Breast epithelium (tissue), 4 donors: ENCODE measurements at regions of chr5 and their contacts with region 1.

Region 1: GRCh38 chr5:108136493-108136892 is 245.4 kb downstream of the FBXL17 start:
- DNase-seq: no peak
- H3K4me3 ChIP-seq: no peak overlapping the region
- H3K27ac ChIP-seq: no peak overlapping the region
- H3K4me1 ChIP-seq: no peaks in the 10 kb centered on the region
- H3K27me3 ChIP-seq: no peaks in the 10 kb centered on the region
- CTCF ChIP-seq: no peak
- POLR2A ChIP-seq: no peak

Region 2: GRCh38 chr5:107329850-107330249 is 806.6 kb before region 1 on chr5:
- intact Hi-C with region 1: no loop called
- DNase-seq: no peak
- H3K4me3 ChIP-seq: no peak overlapping the region
- H3K27ac ChIP-seq: peak overlapping the region in 1 of 2 donors; percentile 78
- H3K4me1 ChIP-seq: no peaks in the 10 kb centered on the region
- H3K27me3 ChIP-seq: no peaks in the 10 kb centered on the region
- CTCF ChIP-seq: no peak
- POLR2A ChIP-seq: no peak

Region 3: GRCh38 chr5:108164574-108164973 is 28.1 kb after region 1 on chr5:
- intact Hi-C with region 1: loop called (anchors 2 kb)
- DNase-seq: no peak
- H3K4me3 ChIP-seq: no peak overlapping the region
- H3K27ac ChIP-seq: no peak overlapping the region
- H3K4me1 ChIP-seq: no peaks in the 10 kb centered on the region
- H3K27me3 ChIP-seq: no peaks in the 10 kb centered on the region
- CTCF ChIP-seq: no peak
- POLR2A ChIP-seq: no peak